ENCODE measurements at regions of chr1 and their contacts with region 1.

Region 1: GRCh38 chr1:201436393-201436792 is 14.9 kb upstream of the TNNI1 start:
- DNase-seq: no peak
- H3K4me3 ChIP-seq: no peak overlapping the region
- H3K27ac ChIP-seq: no peak overlapping the region
- H3K4me1 ChIP-seq: peaks cover 12% of the 10 kb centered on the region
- H3K27me3 ChIP-seq: no peaks in the 10 kb centered on the region
- CTCF ChIP-seq: no peak
- POLR2A ChIP-seq: no peak

Region 2: GRCh38 chr1:201511941-201512539 is 75.6 kb after region 1 on chr1:
- intact Hi-C with region 1: loop called (anchors 5 kb)
- DNase-seq: no peak
- H3K4me3 ChIP-seq: no peak overlapping the region
- H3K27ac ChIP-seq: peak overlapping the region; percentile 78
- H3K4me1 ChIP-seq: peaks cover 40% of the 10 kb centered on the region
- H3K27me3 ChIP-seq: no peaks in the 10 kb centered on the region
- CTCF ChIP-seq: no peak
- POLR2A ChIP-seq: no peak

Measured in vagina (tissue), 2 donors.